GM12878 (cell line): ENCODE measurements at regions of chr9 and their contacts with region 1.

Region 1: DNA sequence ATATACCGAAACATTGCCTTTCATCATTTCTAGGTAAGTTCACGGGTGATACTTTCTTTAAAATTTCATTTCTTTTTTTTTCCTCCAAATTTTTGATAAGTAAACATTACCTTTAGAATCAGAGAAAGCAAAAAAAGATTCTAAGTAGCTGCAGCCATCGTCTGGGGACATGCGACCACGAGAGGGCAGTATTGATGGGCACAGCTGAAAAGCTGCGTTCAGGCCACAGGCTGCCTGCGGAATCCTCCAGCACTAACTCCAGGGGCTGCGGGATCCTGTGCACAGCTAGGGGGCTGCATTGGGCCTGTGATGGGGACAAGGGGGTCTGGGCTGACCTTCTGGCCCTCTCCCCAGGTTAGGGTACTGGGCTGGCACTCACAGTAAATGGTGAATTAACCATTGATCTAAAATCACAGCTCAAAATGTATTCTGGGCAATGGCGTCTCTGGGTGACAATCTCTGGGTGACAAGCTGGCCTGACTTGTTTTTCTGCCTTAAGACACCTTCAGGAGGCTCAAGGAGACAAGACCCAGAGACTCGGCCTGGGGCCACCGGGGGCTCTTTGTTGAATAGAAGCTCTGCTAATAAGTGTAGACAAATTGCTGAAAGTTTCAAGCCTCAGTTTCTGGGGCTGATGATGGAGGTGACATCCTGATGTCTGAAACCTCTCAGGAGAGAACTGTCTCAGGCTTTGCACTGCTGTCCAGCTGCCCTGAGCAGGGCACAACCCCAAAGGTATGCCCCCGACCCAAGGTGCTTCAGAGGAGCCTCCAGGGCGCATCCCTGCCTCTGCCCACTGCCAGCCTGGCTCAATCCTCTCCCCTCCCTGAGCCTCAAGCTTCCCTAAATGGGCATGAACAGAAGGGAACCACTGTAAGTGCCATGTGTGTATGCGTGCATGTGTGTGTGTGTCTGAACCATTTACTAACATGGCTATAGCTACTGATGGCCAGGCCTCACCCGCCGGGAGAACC is 44.3 kb upstream of the SARDH start:
- DNase-seq: peak; percentile 13
- ATAC-seq: peak; percentile 66
- H3K4me3 ChIP-seq: no peak overlapping the region
- H3K27ac ChIP-seq: no peak overlapping the region
- H3K4me1 ChIP-seq: peaks cover 26% of the 10 kb centered on the region
- H3K27me3 ChIP-seq: no peaks in the 10 kb centered on the region
- CTCF ChIP-seq: peak; percentile 70 to 81 (median 78)
- EP300 ChIP-seq: no peak
- POLR2A ChIP-seq: no peak
- RAD21 ChIP-seq: peak; percentile 78

Region 2: GRCh38 chr9:133356391-133357091 is 425.9 kb before region 1 on chr9 and contains the starts of genes SURF1 and SURF2:
- CTCF ChIA-PET with region 1: no interaction called
- POLR2A ChIA-PET with region 1: no interaction called
- RAD21 ChIA-PET with region 1: no interaction called
- SMC1A ChIA-PET with region 1: no interaction called
- in situ Hi-C with region 1: no loop called
- intact Hi-C with region 1: no loop called
- DNase-seq: no peak
- ATAC-seq: peak; percentile 92
- H3K4me3 ChIP-seq: peak within 1 kb of the TSS; percentile 91
- H3K27ac ChIP-seq: peak within 1 kb of the TSS; percentile 43
- H3K4me1 ChIP-seq: no peaks in the 10 kb centered on the region; the same call in none of the 2 replicates
- H3K27me3 ChIP-seq: no peaks in the 10 kb centered on the region
- CTCF ChIP-seq: peak in 2 of 3 experiments; percentile 15 to 20; a peak in 2 of 6 replicates
- EP300 ChIP-seq: no peak
- POLR2A ChIP-seq: peak; percentile 87
- RAD21 ChIP-seq: no peak
- polyA plus RNA-seq, gene SURF1: 19.2 to 34.6 TPM
- polyA plus RNA-seq, gene SURF2: 4.0 to 7.6 TPM

Region 3: GRCh38 chr9:133792721-133793470 is 10.5 kb after region 1 on chr9:
- CTCF ChIA-PET with region 1: interaction called, 14 read pairs
- POLR2A ChIA-PET with region 1: interaction called, 3 read pairs
- RAD21 ChIA-PET with region 1: interaction called, 8 read pairs
- SMC1A ChIA-PET with region 1: no interaction called
- in situ Hi-C with region 1: no loop called
- intact Hi-C with region 1: no loop called
- DNase-seq: no peak
- ATAC-seq: peak; percentile 94
- H3K4me3 ChIP-seq: no peak overlapping the region
- H3K27ac ChIP-seq: no peak overlapping the region; the same call in 1 of the 2 replicates
- H3K4me1 ChIP-seq: peaks cover 19% of the 10 kb centered on the region
- H3K27me3 ChIP-seq: no peaks in the 10 kb centered on the region
- CTCF ChIP-seq: peak; percentile 90 to 97 (median 96)
- EP300 ChIP-seq: no peak
- POLR2A ChIP-seq: no peak
- RAD21 ChIP-seq: peak; percentile 93

Region 4: DNA sequence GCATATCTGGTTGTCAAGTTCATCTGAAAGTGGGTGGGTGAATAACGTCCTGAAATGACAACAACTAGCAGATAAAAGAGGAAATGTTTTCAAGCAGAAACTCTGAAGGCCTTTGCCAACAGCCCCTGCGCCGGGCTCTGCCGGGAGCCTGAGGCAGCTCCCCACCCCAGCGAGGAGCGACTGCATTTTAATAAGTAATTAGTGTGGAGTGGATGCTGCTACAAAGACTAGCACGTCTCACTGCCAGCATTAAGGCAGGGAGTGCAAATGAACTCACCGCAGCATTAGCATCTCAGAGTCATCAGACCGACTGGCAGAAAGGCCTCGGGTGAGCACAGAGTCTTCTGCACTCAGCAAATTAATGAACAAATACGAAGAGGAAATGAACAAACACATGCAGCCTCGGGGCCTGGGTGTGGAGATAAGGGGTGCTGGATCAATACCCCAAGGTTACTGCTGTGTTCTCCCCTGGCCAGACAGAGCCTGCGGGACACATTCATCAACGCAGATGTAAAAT is 145.9 kb after region 1 on chr9:
- CTCF ChIA-PET with region 1: no interaction called
- POLR2A ChIA-PET with region 1: no interaction called
- RAD21 ChIA-PET with region 1: no interaction called
- SMC1A ChIA-PET with region 1: no interaction called
- in situ Hi-C with region 1: no loop called
- intact Hi-C with region 1: no loop called
- DNase-seq: no peak
- ATAC-seq: no peak
- H3K4me3 ChIP-seq: no peak overlapping the region
- H3K27ac ChIP-seq: no peak overlapping the region
- H3K4me1 ChIP-seq: peaks cover 11% of the 10 kb centered on the region
- H3K27me3 ChIP-seq: no peaks in the 10 kb centered on the region
- CTCF ChIP-seq: no peak
- EP300 ChIP-seq: no peak
- POLR2A ChIP-seq: no peak
- RAD21 ChIP-seq: no peak